ENCODE measurements at regions of chr21 and their contacts with region 1.

Region 1: GRCh38 chr21:31326522-31327242 is 17.4 kb downstream of the TIAM1 start:
- DNase-seq: peak; percentile 16
- H3K4me3 Mint-ChIP-seq: peak overlapping the region; percentile 24
- H3K27ac Mint-ChIP-seq: peak overlapping the region; percentile 67
- H3K4me1 Mint-ChIP-seq: peaks cover 19% of the 10 kb centered on the region
- H3K27me3 Mint-ChIP-seq: no peaks in the 10 kb centered on the region

Region 2: GRCh38 chr21:31088315-31088714 is 238.4 kb before region 1 on chr21:
- intact Hi-C with region 1: no loop called
- DNase-seq: no peak
- H3K4me3 Mint-ChIP-seq: no peak overlapping the region
- H3K27ac Mint-ChIP-seq: no peak overlapping the region
- H3K4me1 Mint-ChIP-seq: peaks cover 12% of the 10 kb centered on the region
- H3K27me3 Mint-ChIP-seq: peaks cover 39% of the 10 kb centered on the region

Region 3: DNA sequence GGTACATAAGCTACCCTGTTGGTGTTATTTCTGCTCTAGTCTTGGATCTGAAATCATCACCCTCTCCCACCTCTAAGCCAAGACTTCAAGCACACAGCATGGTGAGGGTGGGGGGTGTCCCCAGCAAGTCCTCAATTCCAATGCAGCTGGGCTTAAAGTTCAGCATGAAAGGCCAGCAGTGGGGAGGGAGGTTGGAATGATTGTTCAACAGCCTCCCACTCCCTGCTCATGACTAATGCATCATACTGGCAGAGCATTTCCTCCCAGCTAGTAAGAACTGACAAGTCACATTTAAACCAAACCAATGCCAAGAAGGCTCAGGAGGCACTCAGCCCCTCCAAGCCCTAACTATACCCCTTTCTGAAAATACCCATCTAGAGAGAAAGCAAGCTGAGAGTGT is 32.7 kb before region 1 on chr21:
- intact Hi-C with region 1: loop called (anchors 2 kb)
- DNase-seq: no peak
- H3K4me3 Mint-ChIP-seq: no peak overlapping the region
- H3K27ac Mint-ChIP-seq: peak overlapping the region; percentile 20
- H3K4me1 Mint-ChIP-seq: peaks cover 20% of the 10 kb centered on the region
- H3K27me3 Mint-ChIP-seq: no peaks in the 10 kb centered on the region

Region 4: GRCh38 chr21:31340942-31341487 is 14.3 kb after region 1 on chr21:
- intact Hi-C with region 1: loop called (anchors 1 kb)
- DNase-seq: no peak
- H3K4me3 Mint-ChIP-seq: no peak overlapping the region
- H3K27ac Mint-ChIP-seq: no peak overlapping the region
- H3K4me1 Mint-ChIP-seq: peaks cover 50% of the 10 kb centered on the region
- H3K27me3 Mint-ChIP-seq: peaks cover 26% of the 10 kb centered on the region

Region 5: DNA sequence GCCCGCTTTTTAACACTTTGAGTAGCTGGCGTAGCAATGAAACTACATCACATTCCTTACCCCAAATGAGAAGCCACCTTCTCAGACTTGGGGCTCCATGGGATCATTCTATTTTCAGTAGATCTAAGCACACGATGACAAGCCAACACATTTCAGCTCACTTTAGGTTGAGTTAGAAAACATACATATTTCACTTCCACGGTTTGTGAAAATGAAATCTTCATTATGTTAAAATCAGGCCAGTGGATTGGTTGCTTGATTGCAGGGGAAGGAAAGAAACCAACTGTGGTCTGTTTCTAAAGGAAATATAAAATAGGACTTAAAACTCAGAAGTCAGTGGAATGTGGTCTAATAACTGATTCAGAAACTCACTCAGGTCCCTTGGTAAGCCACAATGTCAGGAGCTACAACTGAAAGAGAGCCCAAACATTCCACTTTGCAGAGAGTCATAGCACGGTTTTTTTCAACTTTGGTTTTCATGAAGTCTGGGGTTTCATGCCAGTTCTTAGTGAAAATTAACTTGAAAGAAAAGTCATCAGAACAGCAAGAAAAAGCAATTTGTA is 99.6 kb after region 1 on chr21:
- intact Hi-C with region 1: loop called (anchors 1 kb)
- DNase-seq: no peak
- H3K4me3 Mint-ChIP-seq: no peak overlapping the region
- H3K27ac Mint-ChIP-seq: no peak overlapping the region
- H3K4me1 Mint-ChIP-seq: peaks cover 13% of the 10 kb centered on the region
- H3K27me3 Mint-ChIP-seq: peaks cover 1% of the 10 kb centered on the region

Region 6: DNA sequence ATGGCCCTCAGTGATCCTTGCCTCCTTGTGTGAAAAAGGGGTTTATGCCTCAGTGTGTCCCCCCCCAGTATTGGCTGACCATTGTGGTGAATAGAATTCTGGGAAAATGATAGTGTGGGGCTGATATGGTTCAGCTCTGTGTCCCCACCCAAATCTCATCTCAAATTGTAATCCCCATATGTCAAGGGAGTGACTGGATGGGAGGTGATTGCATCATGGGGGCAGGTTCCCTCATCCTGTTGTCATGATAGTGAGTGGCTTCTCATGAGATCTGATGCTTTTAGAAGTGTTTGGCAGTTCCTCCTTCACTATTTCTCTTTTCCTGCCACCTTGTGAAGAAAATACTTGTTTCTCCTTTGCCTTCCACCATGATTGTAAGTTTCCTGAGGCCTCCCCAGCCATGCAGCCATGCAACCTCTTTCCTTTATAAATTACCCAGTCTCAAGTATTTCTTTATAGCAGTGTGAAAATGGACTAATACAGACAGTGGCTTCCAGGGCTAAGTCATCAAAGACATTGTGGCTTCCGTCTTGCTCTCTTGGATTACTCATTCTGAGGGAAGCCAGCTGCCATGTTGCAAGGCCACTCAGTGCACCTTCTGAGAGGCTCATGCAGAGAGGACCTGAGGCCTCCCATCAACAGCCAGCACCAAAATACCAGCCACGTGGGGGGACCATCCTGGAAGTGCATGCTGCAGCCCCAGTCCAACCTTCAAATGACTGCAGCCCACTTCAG is 292.2 kb after region 1 on chr21:
- intact Hi-C with region 1: no loop called
- DNase-seq: no peak
- H3K4me3 Mint-ChIP-seq: no peak overlapping the region
- H3K27ac Mint-ChIP-seq: no peak overlapping the region
- H3K4me1 Mint-ChIP-seq: peaks cover 11% of the 10 kb centered on the region
- H3K27me3 Mint-ChIP-seq: peaks cover 4% of the 10 kb centered on the region

Measured in activated T-helper 2 cell treated with anti-CD3 and anti-CD28 coated beads, Interferon-gamma antibody, Interleukin-2, Interleukin-4, amounts not matched to agents 10 μg/mL and 5 μg/mL and 100 μg/mL, durations not matched to agents 14 hours and 24 hours and 36 hours (primary cell).